GM10248 (cell line): ENCODE measurements at regions of chr11 and their contacts with region 1.

Region 1: DNA sequence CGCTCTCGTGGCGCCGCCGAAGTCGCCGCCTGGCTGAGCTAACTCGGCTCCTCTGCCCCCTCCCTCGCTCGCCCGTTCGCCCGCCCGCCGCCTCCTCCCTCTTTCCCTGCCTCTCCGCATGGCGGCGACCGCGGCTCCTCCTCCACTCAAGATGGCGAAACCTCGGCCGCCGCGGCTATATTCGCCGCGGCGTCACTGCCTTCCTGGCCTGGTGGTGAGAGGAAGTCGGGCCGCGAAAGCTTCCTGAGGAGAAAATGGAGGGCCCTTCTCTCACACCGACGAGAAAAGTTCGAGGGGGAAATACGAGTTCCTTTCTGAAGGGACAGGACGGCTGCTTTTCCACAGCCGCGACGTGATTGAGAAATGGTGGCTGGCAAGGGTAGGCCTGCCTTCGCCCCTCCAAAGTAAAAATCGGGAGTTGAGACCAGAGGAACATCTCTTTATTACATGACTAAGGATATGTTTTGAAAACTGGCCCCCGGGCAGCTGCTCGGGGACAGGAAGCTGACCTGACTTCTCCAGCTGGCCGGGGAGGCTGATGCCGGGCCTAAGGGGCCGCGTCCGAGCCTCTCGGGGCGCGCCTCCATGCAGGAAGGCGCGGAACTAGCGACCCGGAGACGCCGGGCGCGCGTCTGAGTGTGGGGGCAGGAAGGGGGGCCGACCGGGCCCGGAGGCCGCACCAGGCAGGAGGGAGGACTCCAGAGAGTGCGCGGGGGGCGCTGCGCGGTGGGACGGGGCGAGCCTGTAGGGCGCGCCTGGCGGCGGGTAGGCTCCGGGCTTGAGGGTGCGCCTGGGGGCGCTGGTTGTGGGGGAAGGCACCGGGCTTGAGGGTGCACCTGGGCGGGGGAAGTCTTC is at the start of gene DDX6:
- DNase-seq: peak; percentile 88
- CTCF ChIP-seq: peak; percentile 50

Region 2: GRCh38 chr11:118401151-118401878 is 390.0 kb before region 1 on chr11 and contains the start of gene ATP5MG:
- CTCF ChIA-PET with region 1: no interaction called
- POLR2A ChIA-PET with region 1: no interaction called
- DNase-seq: peak; percentile 91
- CTCF ChIP-seq: no peak

Region 3: GRCh38 chr11:118807800-118808778 is 16.8 kb after region 1 on chr11:
- CTCF ChIA-PET with region 1: interaction called, 11 read pairs
- POLR2A ChIA-PET with region 1: no interaction called
- DNase-seq: no peak
- CTCF ChIP-seq: no peak

Region 4: DNA sequence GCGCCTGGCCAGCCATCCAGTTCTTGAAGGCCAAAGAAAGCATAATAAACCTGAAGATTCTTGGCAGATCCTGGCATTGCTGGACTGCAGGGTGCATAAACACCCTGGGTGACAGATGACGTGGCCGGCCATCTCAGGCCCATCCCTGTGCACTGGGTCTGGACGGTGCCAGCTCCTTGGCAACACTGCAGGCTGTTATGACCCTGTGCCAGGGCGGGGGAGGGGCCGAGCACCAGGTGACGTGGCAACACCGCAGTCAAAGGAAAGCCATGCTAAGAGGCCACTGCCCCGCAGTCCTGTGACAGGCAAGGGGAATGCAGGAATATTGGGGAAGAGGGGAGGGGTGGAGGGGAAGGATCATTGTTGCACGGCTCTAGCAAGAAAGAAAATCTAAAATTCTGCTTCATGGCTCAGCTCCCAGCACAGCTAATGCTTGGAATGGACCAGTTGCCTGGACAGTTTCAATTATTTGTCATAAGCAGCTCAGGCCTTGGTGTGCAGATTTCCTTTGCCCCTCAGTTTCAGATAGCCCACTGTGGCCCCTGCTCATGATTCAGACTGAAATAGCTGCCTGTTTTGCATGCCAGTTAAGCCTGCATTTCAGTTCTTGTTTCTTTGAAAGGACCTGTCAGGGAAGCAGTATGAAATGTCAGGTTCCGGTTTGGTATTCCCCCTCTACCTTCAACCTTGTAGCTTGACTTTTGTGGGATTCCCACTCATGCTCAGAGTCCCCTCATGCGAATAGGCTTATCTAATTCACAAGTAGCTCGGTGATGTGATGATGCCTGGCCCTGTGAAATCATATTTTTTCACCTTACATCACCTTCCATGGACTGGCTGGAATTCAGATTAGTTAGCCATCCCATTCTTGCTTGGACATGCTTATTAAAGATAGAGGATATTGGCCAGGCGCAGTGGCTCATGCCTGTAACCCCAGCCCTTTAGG is 29.3 kb after region 1 on chr11:
- CTCF ChIA-PET with region 1: interaction called, 36 read pairs
- POLR2A ChIA-PET with region 1: interaction called, 17 read pairs
- DNase-seq: peak; percentile 83
- CTCF ChIP-seq: no peak

Region 5: GRCh38 chr11:118883368-118884071 is 92.2 kb after region 1 on chr11 and contains the start of gene CXCR5:
- CTCF ChIA-PET with region 1: interaction called, 36 read pairs
- POLR2A ChIA-PET with region 1: interaction called, 7 read pairs
- DNase-seq: peak; percentile 82
- CTCF ChIP-seq: peak; percentile 11

Region 6: DNA sequence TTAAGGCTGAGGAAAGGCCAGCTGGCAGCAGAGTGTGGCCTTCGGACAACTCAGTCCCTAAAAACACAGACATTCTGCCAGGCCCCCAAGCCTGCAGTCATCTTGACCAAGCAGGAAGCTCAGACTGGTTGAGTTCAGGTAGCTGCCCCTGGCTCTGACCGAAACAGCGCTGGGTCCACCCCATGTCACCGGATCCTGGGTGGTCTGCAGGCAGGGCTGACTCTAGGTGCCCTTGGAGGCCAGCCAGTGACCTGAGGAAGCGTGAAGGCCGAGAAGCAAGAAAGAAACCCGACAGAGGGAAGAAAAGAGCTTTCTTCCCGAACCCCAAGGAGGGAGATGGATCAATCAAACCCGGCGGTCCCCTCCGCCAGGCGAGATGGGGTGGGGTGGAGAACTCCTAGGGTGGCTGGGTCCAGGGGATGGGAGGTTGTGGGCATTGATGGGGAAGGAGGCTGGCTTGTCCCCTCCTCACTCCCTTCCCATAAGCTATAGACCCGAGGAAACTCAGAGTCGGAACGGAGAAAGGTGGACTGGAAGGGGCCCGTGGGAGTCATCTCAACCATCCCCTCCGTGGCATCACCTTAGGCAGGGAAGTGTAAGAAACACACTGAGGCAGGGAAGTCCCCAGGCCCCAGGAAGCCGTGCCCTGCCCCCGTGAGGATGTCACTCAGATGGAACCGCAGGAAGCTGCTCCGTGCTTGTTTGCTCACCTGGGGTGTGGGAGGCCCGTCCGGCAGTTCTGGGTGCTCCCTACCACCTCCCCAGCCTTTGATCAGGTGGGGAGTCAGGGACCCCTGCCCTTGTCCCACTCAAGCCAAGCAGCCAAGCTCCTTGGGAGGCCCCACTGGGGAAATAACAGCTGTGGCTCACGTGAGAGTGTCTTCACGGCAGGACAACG is 104.1 kb after region 1 on chr11:
- CTCF ChIA-PET with region 1: interaction called, 14 read pairs
- POLR2A ChIA-PET with region 1: interaction called, 6 read pairs
- DNase-seq: peak; percentile 75
- CTCF ChIP-seq: no peak